Activated T-helper 1 cell treated with anti-CD3 and anti-CD28 coated beads, Interleukin-12 subunit alpha, Interleukin-12 subunit beta, Interleukin-2, Interleukin-4 antibody, amounts not matched to agents 30 ng/mL and 10 ng/mL and 1 ng/mL, durations not matched to agents 14 hours and 24 hours and 36 hours (primary cell): ENCODE measurements at regions of chr19 and their contacts with region 1.

Region 1: GRCh38 chr19:36060430-36060829 is 5.7 kb downstream of the WDR62 start:
- DNase-seq: no peak
- H3K4me3 Mint-ChIP-seq: no peak overlapping the region
- H3K27ac Mint-ChIP-seq: no peak overlapping the region
- H3K4me1 Mint-ChIP-seq: peaks cover 26% of the 10 kb centered on the region
- H3K27me3 Mint-ChIP-seq: no peaks in the 10 kb centered on the region

Region 2: DNA sequence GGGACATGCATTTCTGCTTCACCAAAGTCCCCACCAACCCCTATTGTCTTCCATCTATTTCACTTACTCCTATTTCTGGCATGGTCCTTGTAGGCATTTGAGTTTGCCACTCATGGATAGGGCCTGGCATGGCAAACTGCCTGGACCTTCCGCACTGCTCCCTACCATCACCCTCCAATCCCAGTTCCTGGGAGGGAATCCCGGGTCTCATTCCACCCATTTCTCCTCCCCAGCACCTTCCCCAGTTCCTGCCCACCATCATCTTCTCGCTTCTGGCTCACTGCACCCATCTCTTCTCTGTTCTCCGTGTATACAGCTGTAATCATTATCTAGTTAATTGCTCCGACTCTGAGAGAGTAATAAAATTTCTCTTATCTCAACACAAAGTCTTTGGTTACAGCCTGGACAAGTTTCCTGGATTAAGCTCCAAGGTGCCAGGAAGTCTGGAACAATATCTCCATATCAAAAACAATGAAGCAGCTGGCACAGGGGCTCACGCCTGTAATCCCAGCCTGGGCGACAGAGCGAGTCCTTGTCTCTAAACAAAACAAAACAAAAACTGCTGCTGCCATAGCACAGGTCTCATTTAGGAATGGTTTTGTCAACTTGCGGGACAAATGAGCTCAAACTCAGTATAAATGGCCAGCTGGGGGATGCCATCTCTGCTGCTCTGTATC is 108.8 kb after region 1 on chr19:
- intact Hi-C with region 1: loop called (anchors 1 kb)
- DNase-seq: no peak
- H3K4me3 Mint-ChIP-seq: no peak overlapping the region
- H3K27ac Mint-ChIP-seq: no peak overlapping the region
- H3K4me1 Mint-ChIP-seq: no peaks in the 10 kb centered on the region
- H3K27me3 Mint-ChIP-seq: peaks cover 1% of the 10 kb centered on the region